Panc1 (cell line): ENCODE measurements at regions of chr12 and their contacts with region 1.

Region 1: GRCh38 chr12:14845350-14845750 is 2.0 kb upstream of the ART4 start:
- DNase-seq: no peak
- ATAC-seq: 0 out of 2 replicates have a peak, but pooled peaks have one; percentile 60
- H3K4me3 ChIP-seq: no peak overlapping the region
- H3K27ac ChIP-seq: no peak overlapping the region
- H3K4me1 ChIP-seq: no peaks in the 10 kb centered on the region
- H3K27me3 ChIP-seq: no peaks in the 10 kb centered on the region
- CTCF ChIP-seq: peak; percentile 64

Region 2: DNA sequence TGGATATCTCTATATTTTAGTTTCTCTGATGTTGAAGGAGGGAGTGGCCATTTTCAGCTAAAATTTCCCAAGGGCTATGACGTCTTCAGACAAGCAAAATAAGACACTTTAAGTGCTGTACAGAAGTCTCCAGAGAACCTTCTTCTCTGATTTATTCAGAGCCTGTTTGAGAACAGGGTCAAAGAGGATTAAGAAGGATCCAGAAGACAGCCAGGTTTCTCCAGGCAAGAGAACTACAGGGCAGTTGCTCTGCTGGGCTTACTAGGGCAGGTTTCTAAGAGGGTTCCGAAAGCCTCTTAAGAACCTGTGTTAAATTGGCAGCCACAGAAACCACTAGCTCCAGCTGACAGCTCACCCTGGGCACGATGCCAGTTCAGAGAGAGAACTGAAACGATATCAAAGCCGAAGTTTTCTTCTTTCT is 39.1 kb after region 1 on chr12:
- CTCF ChIA-PET with region 1: no interaction called
- POLR2A ChIA-PET with region 1: no interaction called
- in situ Hi-C with region 1: no loop called
- intact Hi-C with region 1: no loop called
- DNase-seq: no peak
- ATAC-seq: no peak
- H3K4me3 ChIP-seq: no peak overlapping the region; a peak in 1 of 4 replicates
- H3K27ac ChIP-seq: no peak overlapping the region
- H3K4me1 ChIP-seq: no peaks in the 10 kb centered on the region
- H3K27me3 ChIP-seq: no peaks in the 10 kb centered on the region
- CTCF ChIP-seq: no peak

Region 3: GRCh38 chr12:14920475-14921126 is 75.3 kb after region 1 on chr12:
- CTCF ChIA-PET with region 1: no interaction called
- POLR2A ChIA-PET with region 1: no interaction called
- in situ Hi-C with region 1: no loop called
- intact Hi-C with region 1: no loop called
- DNase-seq: no peak
- ATAC-seq: no peak
- H3K4me3 ChIP-seq: no peak overlapping the region
- H3K27ac ChIP-seq: no peak overlapping the region
- H3K4me1 ChIP-seq: no peaks in the 10 kb centered on the region
- H3K27me3 ChIP-seq: no peaks in the 10 kb centered on the region
- CTCF ChIP-seq: no peak

Region 4: GRCh38 chr12:15220994-15221885 is 375.9 kb after region 1 on chr12 and contains the start of gene RERG:
- CTCF ChIA-PET with region 1: no interaction called
- POLR2A ChIA-PET with region 1: no interaction called
- in situ Hi-C with region 1: no loop called
- intact Hi-C with region 1: loop called (anchors 10 kb)
- DNase-seq: peak; percentile 33
- ATAC-seq: peak; percentile 100
- H3K4me3 ChIP-seq: peak within 1 kb of the TSS; percentile 28 to 50
- H3K27ac ChIP-seq: no peak within 1 kb of the TSS
- H3K4me1 ChIP-seq: no peaks in the 10 kb centered on the region; the same call in 1 of the 2 replicates
- H3K27me3 ChIP-seq: peaks cover 2% of the 10 kb centered on the region; the same call in 1 of the 2 replicates
- CTCF ChIP-seq: peak; percentile 93
- total RNA-seq, gene RERG: not detected